Posterior vena cava (tissue), 2 donors: ENCODE measurements at regions of chr5 and their contacts with region 1.

Region 1: DNA sequence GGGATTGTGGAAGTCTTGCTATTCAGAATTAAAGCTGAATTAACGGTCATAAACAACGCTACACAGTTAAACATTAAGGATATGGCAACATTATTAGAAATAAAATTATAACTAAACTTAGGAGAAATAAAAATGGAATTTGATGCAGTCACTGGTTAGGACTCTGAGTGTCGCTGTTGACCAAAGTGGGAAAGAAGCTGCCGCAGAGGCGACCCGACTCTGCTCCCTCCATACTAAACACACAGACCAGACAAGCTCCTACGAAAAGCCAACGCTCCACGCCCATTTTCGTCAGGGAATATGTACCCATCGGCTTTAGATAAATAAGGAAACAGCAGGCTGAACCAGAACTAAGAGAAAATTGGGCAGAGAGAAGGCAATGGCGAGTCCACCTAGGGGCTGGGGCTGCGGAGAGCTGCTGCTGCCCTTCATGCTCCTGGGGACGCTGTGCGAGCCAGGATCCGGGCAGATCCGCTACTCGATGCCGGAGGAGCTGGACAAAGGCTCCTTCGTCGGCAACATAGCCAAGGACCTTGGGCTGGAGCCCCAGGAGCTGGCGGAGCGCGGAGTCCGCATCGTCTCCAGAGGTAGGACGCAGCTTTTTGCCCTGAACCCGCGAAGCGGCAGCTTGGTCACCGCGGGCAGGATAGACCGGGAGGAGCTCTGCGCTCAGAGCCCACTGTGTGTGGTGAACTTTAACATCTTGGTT is at the start of gene PCDHGA5:
- DNase-seq: no peak
- total RNA-seq, gene PCDHGA5: 3.9 to 5.2 TPM

Region 2: DNA sequence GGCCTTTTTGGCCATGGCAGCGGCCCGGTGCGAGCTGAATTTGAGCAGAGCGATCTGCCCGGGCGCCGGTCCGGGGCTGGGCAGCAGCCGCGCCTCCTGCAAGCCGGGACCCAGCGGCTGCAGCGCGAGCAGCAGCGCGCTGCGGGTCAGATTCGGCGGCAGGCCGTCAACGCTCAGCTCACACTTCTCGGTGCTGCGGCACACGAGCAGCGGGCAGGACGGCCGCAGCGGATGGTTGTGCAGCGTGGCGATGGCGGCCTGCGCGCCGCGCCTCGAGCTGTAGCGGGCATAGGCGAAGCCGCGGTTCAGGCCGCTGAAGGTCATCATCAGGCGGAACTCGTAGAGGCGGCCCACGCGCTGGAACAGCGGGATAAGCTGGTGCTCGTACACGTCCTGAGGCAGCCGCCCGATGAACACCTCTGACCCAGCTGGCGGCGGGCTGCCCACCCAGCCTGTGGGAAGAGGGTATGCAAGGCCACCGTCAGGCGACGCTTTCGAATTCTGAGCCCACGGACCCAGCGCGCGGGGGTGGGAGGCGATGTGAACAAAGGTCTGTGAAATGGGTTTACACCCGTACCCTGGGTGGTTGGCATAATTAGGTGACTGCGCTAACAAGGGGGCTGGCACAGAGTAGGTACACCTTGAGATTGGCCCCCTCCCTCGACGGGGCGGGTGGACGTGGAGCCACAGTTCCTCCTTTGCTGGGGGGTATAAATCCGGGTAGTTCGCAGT is 691.5 kb before region 1 on chr5:
- intact Hi-C with region 1: no loop called
- DNase-seq: no peak

Region 3: GRCh38 chr5:141338538-141339306 is 25.4 kb before region 1 on chr5 and contains the start of gene PCDHGA2:
- intact Hi-C with region 1: loop called in 1 of 2 experiments (anchors 2 kb)
- DNase-seq: peak; percentile 57
- total RNA-seq, gene PCDHGA2: 3.7 to 7.4 TPM

Region 4: DNA sequence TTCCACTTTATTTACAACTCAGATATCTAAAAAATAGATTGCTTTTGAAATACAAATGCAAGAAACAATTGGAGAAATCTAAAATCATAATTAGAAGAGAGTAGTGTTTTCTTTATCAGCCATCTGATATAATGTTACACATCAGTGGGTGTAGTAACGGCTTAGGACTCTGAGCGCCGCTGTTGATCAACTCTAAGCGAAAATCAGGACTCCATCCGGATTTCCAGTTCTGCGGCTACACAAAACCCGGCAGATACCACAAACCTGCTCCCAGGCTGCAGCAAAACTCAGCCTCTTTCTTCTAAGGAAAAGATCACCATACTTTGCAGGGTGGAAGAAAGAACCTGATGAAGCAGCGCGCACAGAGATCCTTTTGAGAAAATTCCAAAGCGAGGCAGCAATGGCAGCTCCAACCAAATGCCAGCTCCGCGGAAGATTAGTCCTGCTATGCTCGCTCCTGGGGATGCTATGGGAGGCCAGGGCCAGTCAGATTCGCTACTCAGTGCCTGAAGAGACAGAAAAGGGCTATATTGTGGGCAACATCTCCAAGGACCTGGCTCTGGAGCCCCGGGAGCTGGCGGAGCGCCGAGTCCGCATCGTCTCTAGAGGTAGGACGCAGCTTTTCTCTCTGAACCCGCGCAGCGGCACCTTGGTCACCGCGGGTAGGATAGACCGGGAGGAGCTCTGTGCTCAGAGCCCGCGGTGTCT is 38.6 kb after region 1 on chr5 and contains the start of gene PCDHGA9:
- intact Hi-C with region 1: no loop called
- DNase-seq: no peak
- total RNA-seq, gene PCDHGA9: 5.6 to 7.2 TPM